ENCODE measurements at regions of chr15 and their contacts with region 1.

Region 1: DNA sequence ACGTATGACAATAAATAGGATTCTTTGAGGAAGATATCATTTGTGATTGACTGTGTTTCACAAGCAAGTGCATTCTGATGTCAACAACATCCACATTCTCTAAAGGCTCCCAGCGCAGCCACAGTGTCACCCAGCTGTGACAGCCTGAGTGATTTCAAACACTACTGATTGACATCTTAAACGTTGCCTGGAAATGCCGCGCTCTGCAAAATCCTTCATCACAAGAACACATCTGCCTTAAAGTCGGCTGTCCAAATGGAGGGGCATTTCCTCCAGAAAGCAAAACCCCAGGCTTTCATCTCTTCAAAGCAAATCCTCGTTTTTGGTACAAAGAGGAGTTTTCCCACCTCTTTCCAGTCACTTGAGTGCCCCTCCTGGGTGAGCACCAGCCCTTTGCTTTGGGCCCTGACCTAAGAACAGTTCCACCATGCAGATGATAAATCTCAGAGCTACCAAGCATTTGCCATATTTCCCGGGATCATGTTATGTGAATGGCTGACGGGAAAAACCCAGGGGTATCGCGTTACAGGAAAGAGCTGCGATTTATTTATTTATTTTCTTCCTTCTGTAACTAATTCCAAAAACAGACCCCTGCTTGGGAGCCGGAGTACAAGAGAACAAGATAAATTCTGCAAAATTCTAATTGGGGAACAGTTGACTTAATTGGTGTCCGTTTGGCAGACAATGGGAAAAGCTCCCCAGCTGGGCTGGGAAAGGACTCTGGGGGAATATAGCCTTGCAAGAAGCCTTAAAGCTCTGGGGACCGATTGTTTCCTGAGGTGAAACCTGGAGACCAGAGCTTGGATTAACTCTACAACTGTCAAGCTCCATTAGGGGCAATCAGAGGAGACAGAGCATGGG is 703.8 kb upstream of the NR2F2 start:
- DNase-seq: no peak

Region 2: GRCh38 chr15:95604634-95605036 is 22.1 kb before region 1 on chr15:
- intact Hi-C with region 1: no loop called
- DNase-seq: no peak

Region 3: DNA sequence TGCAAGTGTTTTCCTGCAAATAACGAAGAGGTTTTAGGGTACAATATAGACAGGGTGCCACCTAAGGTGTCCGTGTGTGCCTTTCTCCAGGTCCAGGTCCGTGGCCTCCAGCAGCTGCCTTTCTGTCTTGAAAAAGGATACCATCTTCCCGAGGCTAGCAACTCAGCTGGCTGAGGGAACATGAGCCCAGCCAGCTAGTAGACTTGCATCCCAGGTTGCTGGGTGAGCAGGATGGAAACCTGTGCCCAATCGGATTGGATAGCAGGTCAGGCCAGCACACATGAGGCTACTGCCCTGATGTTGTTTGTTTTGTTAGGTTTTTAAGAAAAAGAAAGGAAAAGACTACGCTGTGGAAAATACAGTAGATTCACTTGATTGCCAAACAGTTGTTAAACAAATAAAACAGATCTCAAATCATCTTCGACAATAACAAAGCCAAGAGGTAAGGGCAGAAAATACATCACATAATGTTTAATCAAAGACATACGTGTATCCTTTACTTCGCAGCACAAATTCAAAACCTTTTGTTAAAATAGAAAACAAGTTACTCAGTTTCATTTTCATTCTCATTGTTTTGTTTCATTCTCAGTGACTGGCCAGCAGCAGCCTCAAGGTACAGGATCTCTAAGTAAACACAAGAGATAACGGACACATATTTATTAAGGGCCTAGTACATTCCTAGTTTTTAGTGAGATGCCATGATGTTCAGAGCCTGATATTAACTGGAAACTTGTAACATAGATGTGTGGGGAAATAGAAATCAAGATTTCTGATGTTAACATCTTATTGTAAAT is 42.6 kb after region 1 on chr15:
- intact Hi-C with region 1: loop called in 1 of 2 experiments (anchors 1 kb)
- DNase-seq: no peak

Measured in posterior vena cava (tissue), 2 donors.